ENCODE measurements at regions of chr6 and their contacts with region 1.

Region 1: DNA sequence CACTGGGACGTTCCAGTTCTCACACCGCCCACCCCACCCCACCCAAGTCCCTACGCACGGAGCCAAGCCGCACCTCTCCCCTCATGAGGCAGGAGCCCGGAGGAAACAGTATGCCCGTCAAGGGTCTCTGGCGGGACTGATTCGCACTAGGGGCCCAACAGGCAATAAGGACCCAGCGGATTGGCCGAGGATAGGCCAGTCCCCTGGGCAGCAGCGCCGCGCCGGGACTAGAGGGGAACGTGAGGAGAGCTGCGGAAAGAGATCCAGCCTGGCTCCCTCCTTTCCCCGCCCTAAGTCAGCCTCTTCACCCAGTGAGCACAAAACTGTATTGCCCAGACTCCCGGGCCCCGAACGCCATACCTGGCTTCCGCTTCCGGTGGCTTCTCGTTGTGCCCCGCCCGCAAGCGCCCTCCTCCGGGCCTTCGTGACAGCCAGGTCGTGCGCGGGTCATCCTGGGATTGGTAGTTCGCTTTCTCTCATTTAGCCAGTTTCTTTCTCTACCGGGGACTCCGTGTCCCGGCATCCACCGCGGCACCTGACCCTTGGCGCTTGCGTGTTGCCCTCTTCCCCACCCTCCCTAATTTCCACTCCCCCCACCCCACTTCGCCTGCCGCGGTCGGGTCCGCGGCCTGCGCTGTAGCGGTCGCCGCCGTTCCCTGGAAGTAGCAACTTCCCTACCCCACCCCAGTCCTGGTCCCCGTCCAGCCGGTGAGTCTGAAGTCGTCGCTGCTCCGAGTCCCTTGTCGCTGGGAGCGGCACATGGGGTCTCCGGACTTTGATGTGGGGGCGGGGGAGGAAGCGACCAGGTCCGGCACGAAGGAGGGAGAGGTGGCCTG is at the start of gene CSNK2B:
- DNase-seq: peak; percentile 97 to 99
- H3K4me3 ChIP-seq: peak within 1 kb of the TSS; percentile 72 to 97
- H3K27ac ChIP-seq: peak within 1 kb of the TSS; percentile 91 to 97
- H3K4me1 ChIP-seq: peaks cover 16 to 34% of the 10 kb centered on the region in 2 donors
- H3K27me3 ChIP-seq: no peaks in the 10 kb centered on the region
- CTCF ChIP-seq: peak in 1 of 3 experiments; percentile 35
- total RNA-seq, gene CSNK2B: 148 TPM

Region 2: GRCh38 chr6:31619805-31620585 is 45.7 kb before region 1 on chr6:
- intact Hi-C with region 1: loop called (anchors 1 kb)
- DNase-seq: peak; percentile 97 to 99
- H3K4me3 ChIP-seq: peak overlapping the region; percentile 76 to 93
- H3K27ac ChIP-seq: peak overlapping the region; percentile 98 to 99
- H3K4me1 ChIP-seq: peaks cover 8 to 9% of the 10 kb centered on the region in 2 donors
- H3K27me3 ChIP-seq: no peaks in the 10 kb centered on the region
- CTCF ChIP-seq: no peak

Region 3: GRCh38 chr6:31702819-31703522 is 37.3 kb after region 1 on chr6 and contains the start of gene ABHD16A:
- intact Hi-C with region 1: loop called (anchors 1 kb)
- DNase-seq: peak; percentile 97 to 100
- H3K4me3 ChIP-seq: peak within 1 kb of the TSS; percentile 72 to 78
- H3K27ac ChIP-seq: peak within 1 kb of the TSS; percentile 92 to 97
- H3K4me1 ChIP-seq: peaks cover 13 to 21% of the 10 kb centered on the region in 2 donors
- H3K27me3 ChIP-seq: no peaks in the 10 kb centered on the region
- CTCF ChIP-seq: no peak
- total RNA-seq, gene ABHD16A: 28.0 TPM

Region 4: GRCh38 chr6:31834434-31835198 is 168.9 kb after region 1 on chr6:
- intact Hi-C with region 1: loop called (anchors 5 kb)
- DNase-seq: peak in 1 of 2 donors; percentile 91
- H3K4me3 ChIP-seq: peak overlapping the region; percentile 67 to 80
- H3K27ac ChIP-seq: peak overlapping the region; percentile 84 to 90
- H3K4me1 ChIP-seq: peaks cover 21 to 43% of the 10 kb centered on the region in 2 donors
- H3K27me3 ChIP-seq: no peaks in the 10 kb centered on the region
- CTCF ChIP-seq: no peak

Region 5: GRCh38 chr6:32177788-32178546 is 512.2 kb after region 1 on chr6 and contains the start of gene RNF5:
- intact Hi-C with region 1: loop called (anchors 10 kb)
- DNase-seq: peak; percentile 96 to 99
- H3K4me3 ChIP-seq: peak within 1 kb of the TSS; percentile 73 to 99
- H3K27ac ChIP-seq: peak within 1 kb of the TSS; percentile 87 to 92
- H3K4me1 ChIP-seq: peaks cover 9 to 27% of the 10 kb centered on the region in 2 donors
- H3K27me3 ChIP-seq: no peaks in the 10 kb centered on the region
- CTCF ChIP-seq: no peak
- total RNA-seq, gene RNF5: 73.0 TPM

Region 6: GRCh38 chr6:33317669-33318425 is 1652.1 kb after region 1 on chr6 and contains the start of gene ZBTB22:
- intact Hi-C with region 1: loop called (anchors 10 kb)
- DNase-seq: peak; percentile 99 to 100
- H3K4me3 ChIP-seq: peak within 1 kb of the TSS; percentile 59 to 64
- H3K27ac ChIP-seq: peak within 1 kb of the TSS; percentile 75 to 93
- H3K4me1 ChIP-seq: peaks cover 20 to 49% of the 10 kb centered on the region in 2 donors
- H3K27me3 ChIP-seq: no peaks in the 10 kb centered on the region
- CTCF ChIP-seq: no peak
- total RNA-seq, gene ZBTB22: 35.5 TPM

Measured in ascending aorta (tissue), 2 donors.